PC-9 (cell line): ENCODE measurements at regions of chr1 and their contacts with region 1.

Region 1: GRCh38 chr1:201348211-201348566 is 29.3 kb downstream of the TNNT2 start:
- DNase-seq: peak; percentile 25 to 69
- H3K4me3 ChIP-seq: no peak overlapping the region
- H3K27ac ChIP-seq: no peak overlapping the region
- H3K4me1 ChIP-seq: peaks cover 17% of the 10 kb centered on the region
- H3K27me3 ChIP-seq: no peaks in the 10 kb centered on the region
- CTCF ChIP-seq: peak; percentile 82

Region 2: GRCh38 chr1:201154389-201155165 is 193.6 kb before region 1 on chr1 and contains the start of gene TMEM9:
- CTCF ChIA-PET with region 1: no interaction called
- POLR2A ChIA-PET with region 1: interaction called, 47 read pairs
- intact Hi-C with region 1: no loop called
- DNase-seq: peak; percentile 80 to 96
- H3K4me3 ChIP-seq: peak within 1 kb of the TSS; percentile 61
- H3K27ac ChIP-seq: no peak within 1 kb of the TSS
- H3K4me1 ChIP-seq: peaks cover 11% of the 10 kb centered on the region; the same call in 1 of the 2 replicates
- H3K27me3 ChIP-seq: no peaks in the 10 kb centered on the region
- CTCF ChIP-seq: no peak
- total RNA-seq, gene TMEM9: 92.9 and 94.3 TPM in 2 replicates

Region 3: GRCh38 chr1:201268604-201269151 is 79.5 kb before region 1 on chr1:
- CTCF ChIA-PET with region 1: no interaction called
- POLR2A ChIA-PET with region 1: no interaction called
- intact Hi-C with region 1: loop called (anchors 5 kb)
- DNase-seq: no peak
- H3K4me3 ChIP-seq: no peak overlapping the region
- H3K27ac ChIP-seq: peak overlapping the region; percentile 87
- H3K4me1 ChIP-seq: peaks cover 41% of the 10 kb centered on the region
- H3K27me3 ChIP-seq: no peaks in the 10 kb centered on the region
- CTCF ChIP-seq: no peak

Region 4: DNA sequence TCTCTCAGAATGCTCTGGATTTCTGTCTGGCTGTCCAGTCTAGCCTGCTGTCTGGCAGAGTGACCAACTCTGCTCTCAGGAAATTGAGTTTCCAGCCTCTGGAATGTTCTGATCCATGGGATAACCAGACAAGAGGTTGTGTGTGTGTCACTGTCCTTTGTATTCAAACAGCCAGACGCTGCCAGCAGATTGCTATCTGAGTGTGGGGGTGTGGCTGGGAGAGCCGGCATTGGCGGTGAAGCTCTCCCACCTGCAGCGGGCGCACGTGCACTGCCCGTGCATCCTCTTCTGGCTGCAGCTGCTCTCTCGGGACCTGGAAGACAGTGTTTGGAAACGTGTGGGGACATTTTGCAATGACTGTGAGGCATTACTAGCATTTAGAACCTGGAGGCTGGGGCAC is 38.8 kb before region 1 on chr1:
- CTCF ChIA-PET with region 1: interaction called, 8 read pairs
- POLR2A ChIA-PET with region 1: no interaction called
- intact Hi-C with region 1: loop called (anchors 5 kb)
- DNase-seq: peak; percentile 87 to 89
- H3K4me3 ChIP-seq: no peak overlapping the region
- H3K27ac ChIP-seq: peak overlapping the region; percentile 63
- H3K4me1 ChIP-seq: peaks cover 52% of the 10 kb centered on the region
- H3K27me3 ChIP-seq: no peaks in the 10 kb centered on the region
- CTCF ChIP-seq: no peak

Region 5: GRCh38 chr1:201408176-201408833 is 60.1 kb after region 1 on chr1:
- CTCF ChIA-PET with region 1: no interaction called
- POLR2A ChIA-PET with region 1: no interaction called
- intact Hi-C with region 1: loop called (anchors 2 kb)
- DNase-seq: peak; percentile 67 to 84
- H3K4me3 ChIP-seq: no peak overlapping the region
- H3K27ac ChIP-seq: no peak overlapping the region
- H3K4me1 ChIP-seq: no peaks in the 10 kb centered on the region
- H3K27me3 ChIP-seq: peaks cover 9% of the 10 kb centered on the region; the same call in 1 of the 2 replicates
- CTCF ChIP-seq: peak; percentile 95

Region 6: DNA sequence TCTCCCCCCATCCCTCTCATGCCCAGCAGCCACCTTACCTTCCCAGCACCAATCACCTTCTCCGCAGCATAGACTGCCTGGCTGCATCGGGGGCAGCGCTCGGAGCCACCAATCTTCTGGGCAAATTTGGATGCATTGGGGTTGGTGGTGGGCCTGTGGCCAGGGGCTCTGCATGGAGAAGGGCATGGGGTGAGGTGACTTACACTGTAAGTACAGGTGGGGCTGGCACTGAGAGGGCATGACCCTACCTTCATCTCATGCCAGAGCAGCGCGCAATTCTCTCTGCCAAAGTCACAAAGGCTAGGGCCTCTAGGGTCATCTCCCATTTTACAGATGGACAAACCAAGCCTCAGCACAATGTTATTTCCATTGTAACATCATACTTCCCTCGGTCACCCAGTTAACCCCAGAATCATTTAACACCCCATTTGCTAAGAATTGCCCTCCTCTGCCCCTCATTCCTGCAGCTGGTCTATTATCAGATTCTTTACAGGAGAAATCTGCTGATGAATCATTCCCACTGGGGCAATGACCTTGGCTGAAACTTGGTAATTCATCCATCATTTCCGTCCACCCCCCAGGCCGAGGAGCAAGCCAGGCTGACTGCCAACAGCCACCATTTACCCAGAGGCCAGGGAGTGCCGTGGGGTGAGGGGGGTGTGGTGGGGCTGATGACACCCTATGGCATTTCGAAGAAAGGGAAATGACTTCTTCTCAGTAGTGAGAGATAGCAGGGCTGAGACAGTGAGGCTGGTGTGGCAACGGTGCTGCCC is 140.8 kb after region 1 on chr1:
- CTCF ChIA-PET with region 1: interaction called, 14 read pairs
- POLR2A ChIA-PET with region 1: no interaction called
- intact Hi-C with region 1: no loop called
- DNase-seq: peak; percentile 92 to 95
- H3K4me3 ChIP-seq: no peak overlapping the region
- H3K27ac ChIP-seq: peak overlapping the region; percentile 78
- H3K4me1 ChIP-seq: peaks cover 43% of the 10 kb centered on the region
- H3K27me3 ChIP-seq: no peaks in the 10 kb centered on the region
- CTCF ChIP-seq: no peak